Activated naive CD4-positive, alpha-beta T cell treated with anti-CD3 and anti-CD28 coated beads, Interleukin-2, amount 10 ng/mL, durations not matched to agents 7 days and 5 days (primary cell): ENCODE measurements at regions of chr3 and their contacts with region 1.

Region 1: GRCh38 chr3:112437146-112438022 is 61.9 kb downstream of the BTLA start:
- DNase-seq: peak; percentile 28
- H3K4me3 Mint-ChIP-seq: no peak overlapping the region
- H3K27ac Mint-ChIP-seq: peak overlapping the region; percentile 68
- H3K4me1 Mint-ChIP-seq: peaks cover 42% of the 10 kb centered on the region
- H3K27me3 Mint-ChIP-seq: no peaks in the 10 kb centered on the region

Region 2: DNA sequence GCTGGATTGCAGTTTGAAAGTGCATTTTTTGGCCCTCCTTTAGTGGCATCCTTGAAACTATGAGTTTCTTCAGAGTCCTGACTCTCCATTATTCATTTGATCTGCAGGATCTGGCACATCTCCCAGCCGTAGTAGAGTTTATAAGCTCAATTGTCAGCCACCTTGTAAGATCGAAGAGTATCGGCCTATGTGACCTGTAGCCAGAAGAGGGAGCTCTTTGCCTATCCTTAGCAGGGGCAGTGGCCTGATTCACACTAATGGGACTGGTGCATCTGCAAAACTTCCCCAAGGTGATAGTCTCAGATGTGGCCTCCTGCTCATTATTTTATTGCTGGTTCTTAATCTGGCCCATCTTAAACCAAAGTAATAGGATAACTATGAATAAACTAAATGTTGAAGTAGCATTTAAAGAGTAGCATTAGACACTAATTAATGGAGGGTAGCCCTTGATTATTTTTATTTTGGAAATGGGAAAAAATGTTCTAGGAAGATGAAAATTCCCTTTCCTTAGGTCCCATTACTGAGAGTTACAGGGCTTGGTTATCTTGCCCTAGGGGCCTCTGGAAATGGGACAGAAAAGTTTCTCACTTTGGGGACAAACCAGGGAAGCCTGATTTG is 325.5 kb before region 1 on chr3:
- CTCF ChIA-PET with region 1: interaction called, 11 read pairs
- DNase-seq: peak; percentile 77
- H3K4me3 Mint-ChIP-seq: no peak overlapping the region
- H3K27ac Mint-ChIP-seq: no peak overlapping the region
- H3K4me1 Mint-ChIP-seq: peaks cover 14% of the 10 kb centered on the region
- H3K27me3 Mint-ChIP-seq: no peaks in the 10 kb centered on the region

Region 3: DNA sequence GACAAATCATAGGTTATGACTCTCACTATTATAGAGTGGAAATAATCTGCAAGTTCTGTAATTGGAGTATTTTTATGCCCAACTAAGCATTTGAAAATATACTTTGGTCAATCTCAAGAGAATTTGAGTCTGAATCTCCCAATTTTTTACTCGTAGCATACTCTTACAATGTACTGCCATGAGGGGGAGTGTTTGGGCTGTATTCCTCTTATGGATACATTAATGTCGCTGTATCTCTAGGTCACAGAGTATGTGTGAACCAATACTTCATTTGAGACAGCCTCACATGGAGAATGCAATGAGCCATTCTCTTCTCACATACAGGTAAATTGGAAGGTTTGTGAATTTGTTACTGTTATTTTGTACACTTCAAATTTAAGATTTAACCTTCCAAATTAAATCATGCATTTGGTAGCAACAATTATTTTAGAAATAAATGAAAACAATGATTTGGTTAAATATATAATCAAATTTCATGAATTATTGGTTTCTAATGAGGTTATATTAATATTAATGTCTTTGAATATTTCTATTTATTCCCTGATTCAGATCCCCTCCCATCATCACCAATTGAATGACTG is 109.9 kb before region 1 on chr3:
- CTCF ChIA-PET with region 1: interaction called, 52 read pairs
- DNase-seq: peak; percentile 65
- H3K4me3 Mint-ChIP-seq: no peak overlapping the region
- H3K27ac Mint-ChIP-seq: no peak overlapping the region
- H3K4me1 Mint-ChIP-seq: peaks cover 12% of the 10 kb centered on the region
- H3K27me3 Mint-ChIP-seq: peaks cover 12% of the 10 kb centered on the region

Region 4: DNA sequence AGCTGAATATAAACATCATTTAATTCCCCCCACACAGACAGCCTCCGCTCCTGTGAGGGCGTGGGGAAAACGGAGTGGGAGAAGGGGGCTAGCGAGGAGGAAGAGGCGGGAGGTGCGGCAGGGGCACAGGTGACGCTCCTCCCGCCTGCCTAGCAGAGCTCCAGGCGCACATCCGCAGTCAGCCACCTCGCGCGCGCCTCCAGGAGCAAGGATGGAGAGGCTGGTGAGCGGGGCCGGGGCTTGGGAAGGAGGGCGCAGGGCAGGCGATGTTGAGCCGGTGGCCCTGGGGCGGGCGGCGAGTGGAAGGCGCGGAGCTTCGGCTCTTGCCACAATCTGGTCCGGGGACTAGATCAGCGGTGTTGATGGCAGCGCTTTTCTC is 104.4 kb before region 1 on chr3 and contains the start of gene CD200:
- CTCF ChIA-PET with region 1: interaction called, 52 read pairs
- DNase-seq: peak; percentile 72
- H3K4me3 Mint-ChIP-seq: peak within 1 kb of the TSS; percentile 85
- H3K27ac Mint-ChIP-seq: peak within 1 kb of the TSS; percentile 88
- H3K4me1 Mint-ChIP-seq: peaks cover 54% of the 10 kb centered on the region
- H3K27me3 Mint-ChIP-seq: no peaks in the 10 kb centered on the region

Region 5: GRCh38 chr3:112751564-112752512 is 314.5 kb after region 1 on chr3:
- CTCF ChIA-PET with region 1: no interaction called
- DNase-seq: no peak
- H3K4me3 Mint-ChIP-seq: no peak overlapping the region
- H3K27ac Mint-ChIP-seq: no peak overlapping the region
- H3K4me1 Mint-ChIP-seq: peaks cover 3% of the 10 kb centered on the region
- H3K27me3 Mint-ChIP-seq: peaks cover 5% of the 10 kb centered on the region